Mammary epithelial cell (primary cell): ENCODE measurements at regions of chr1 and their contacts with region 1.

Region 1: DNA sequence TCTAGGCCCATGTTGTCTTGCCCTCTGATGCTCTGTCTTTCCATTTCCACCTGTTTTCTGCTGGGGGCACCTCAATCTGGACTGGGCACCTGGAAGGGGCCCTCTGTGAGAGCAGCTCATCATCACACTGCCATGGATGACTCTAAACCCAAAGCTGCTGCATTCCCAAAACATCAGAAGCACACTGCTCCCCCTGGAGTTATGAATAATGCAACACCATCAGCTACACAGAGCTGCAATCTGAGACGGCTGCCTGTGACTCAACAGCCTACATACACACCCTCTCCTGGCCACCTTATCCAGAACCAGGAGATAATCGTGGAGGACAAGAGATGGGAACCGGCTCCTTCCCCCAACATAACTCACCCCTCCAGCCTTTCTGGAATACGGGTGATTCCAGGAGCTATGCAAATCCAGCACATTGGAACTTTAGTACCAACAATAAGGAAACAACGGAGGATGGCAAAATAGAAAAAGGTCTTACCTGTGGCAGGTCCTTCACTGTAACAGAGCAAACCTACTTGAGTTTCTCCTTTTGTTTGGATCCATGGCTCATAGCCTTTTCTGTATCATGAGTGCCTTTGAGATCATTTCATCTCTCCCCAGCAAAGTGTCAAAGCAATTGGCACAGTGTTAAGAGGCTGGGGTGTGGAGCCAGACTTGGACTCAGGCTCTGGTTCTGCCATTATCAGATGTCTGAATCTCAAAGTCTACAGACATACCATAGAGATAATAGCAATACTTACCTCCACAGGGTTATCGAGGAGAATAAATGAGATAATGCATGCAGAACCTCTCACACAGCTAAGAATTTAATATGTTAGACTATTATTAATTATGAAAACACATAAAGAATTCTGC is 29.3 kb downstream of the AK2 start:
- DNase-seq: peak; percentile 93
- H3K4me3 ChIP-seq: no peak overlapping the region
- H3K27ac ChIP-seq: peak overlapping the region; percentile 51
- H3K4me1 ChIP-seq: peaks cover 55% of the 10 kb centered on the region
- H3K27me3 ChIP-seq: no peaks in the 10 kb centered on the region
- CTCF ChIP-seq: peak; percentile 74 to 76

Region 2: DNA sequence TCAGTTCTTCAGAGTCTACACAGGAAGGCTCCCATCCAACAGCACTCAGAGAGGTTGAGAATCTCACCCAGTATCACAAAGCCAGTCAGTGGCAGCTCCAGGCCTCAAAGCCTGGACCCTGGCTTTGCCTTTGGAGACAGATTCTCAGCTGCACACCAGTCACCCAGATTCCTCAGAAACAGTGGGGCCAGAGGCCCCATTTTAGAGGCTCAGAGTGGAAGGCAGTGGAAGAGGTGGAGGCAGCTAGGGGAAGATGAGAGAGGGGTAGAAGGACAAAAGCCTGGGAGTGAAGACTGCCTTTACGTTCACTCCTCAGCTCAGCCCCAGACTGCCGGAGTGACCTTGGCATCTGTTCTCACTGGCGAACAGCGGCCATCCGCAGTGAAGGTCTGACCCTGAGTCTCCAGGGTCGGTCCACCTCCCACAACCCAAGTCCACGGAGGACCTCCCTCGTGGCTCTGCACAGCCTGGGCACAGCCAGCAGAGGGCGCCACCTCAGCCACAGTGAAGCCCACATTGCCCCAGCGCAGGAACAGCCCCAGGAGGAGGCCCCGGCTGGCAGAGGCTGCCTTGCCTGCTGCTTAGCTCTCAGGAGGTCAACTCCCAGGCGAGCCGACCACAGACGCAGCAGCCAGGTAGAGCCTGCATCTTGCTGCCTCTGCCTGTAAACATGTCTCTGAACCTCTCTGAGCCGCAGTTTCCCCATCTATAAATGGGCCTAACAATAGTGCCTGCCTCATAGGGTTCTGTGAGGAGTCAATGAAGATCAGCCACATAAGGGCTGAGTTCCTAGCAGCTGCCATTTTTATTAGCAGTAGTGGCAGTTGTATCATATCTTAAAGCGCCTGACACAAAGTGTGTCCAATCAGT is 130.8 kb before region 1 on chr1:
- CTCF ChIA-PET with region 1: interaction called, 3 read pairs
- dilution Hi-C with region 1: no loop called
- in situ Hi-C with region 1: no loop called
- intact Hi-C with region 1: loop called (anchors 2 kb)
- DNase-seq: no peak
- H3K4me3 ChIP-seq: no peak overlapping the region
- H3K27ac ChIP-seq: no peak overlapping the region
- H3K4me1 ChIP-seq: peaks cover 3% of the 10 kb centered on the region
- H3K27me3 ChIP-seq: peaks cover 1% of the 10 kb centered on the region
- CTCF ChIP-seq: peak; percentile 87 to 92

Region 3: DNA sequence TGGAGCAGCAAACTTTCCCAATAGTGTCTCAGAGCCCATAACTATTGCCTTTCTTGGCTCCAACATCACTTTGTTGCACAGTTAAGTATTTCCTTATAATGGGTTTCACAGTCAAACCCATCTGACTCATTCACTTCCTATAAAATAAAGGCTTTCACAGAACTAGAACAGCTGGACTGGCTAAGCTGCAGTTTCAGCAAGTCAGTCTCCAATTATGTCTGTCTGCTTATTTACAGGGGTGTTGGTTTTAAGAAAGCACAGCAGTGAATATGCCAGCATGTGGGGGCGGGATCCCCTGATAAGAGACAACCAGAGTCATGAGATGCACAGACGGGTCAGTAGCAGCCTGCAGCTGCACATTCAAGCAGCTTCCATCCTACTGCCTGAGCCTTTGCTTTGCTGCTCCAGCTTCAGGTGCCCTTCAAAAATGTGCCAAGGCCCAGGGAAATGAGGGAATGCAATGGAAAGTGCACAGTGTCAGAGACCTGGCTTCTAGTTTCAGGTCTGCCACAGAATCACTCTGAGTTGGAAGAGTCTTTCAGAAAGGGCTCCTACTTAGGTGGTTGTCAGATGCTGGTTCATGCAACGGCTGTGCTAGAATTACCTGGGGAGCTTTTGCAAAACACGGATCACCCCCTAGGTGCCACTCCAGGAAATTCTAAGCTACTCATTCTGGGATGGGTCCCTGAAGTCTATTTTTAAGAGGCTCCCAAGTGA is 67.6 kb before region 1 on chr1:
- CTCF ChIA-PET with region 1: no interaction called
- dilution Hi-C with region 1: loop called (anchors 5 kb)
- in situ Hi-C with region 1: loop called in 1 of 2 experiments (anchors 5 kb)
- intact Hi-C with region 1: no loop called
- DNase-seq: peak; percentile 94
- H3K4me3 ChIP-seq: no peak overlapping the region
- H3K27ac ChIP-seq: peak overlapping the region; percentile 63
- H3K4me1 ChIP-seq: peaks cover 30% of the 10 kb centered on the region
- H3K27me3 ChIP-seq: no peaks in the 10 kb centered on the region
- CTCF ChIP-seq: no peak

Region 4: GRCh38 chr1:32964461-32965250 is 42.8 kb before region 1 on chr1 and contains the start of gene RNF19B:
- CTCF ChIA-PET with region 1: no interaction called
- dilution Hi-C with region 1: no loop called
- in situ Hi-C with region 1: no loop called
- intact Hi-C with region 1: loop called (anchors 1 kb)
- DNase-seq: peak; percentile 97
- H3K4me3 ChIP-seq: peak within 1 kb of the TSS; percentile 85 to 99 (median 96)
- H3K27ac ChIP-seq: peak within 1 kb of the TSS; percentile 87
- H3K4me1 ChIP-seq: peaks cover 43% of the 10 kb centered on the region
- H3K27me3 ChIP-seq: no peaks in the 10 kb centered on the region
- CTCF ChIP-seq: no peak
- total RNA-seq, gene RNF19B: 30.5 to 62.4 TPM

Region 5: GRCh38 chr1:32992489-32993323 is 14.7 kb before region 1 on chr1:
- CTCF ChIA-PET with region 1: interaction called, 3 read pairs
- dilution Hi-C with region 1: no loop called
- in situ Hi-C with region 1: no loop called
- intact Hi-C with region 1: loop called (anchors 1 kb)
- DNase-seq: peak; percentile 100
- H3K4me3 ChIP-seq: no peak overlapping the region
- H3K27ac ChIP-seq: peak overlapping the region; percentile 95
- H3K4me1 ChIP-seq: peaks cover 60% of the 10 kb centered on the region
- H3K27me3 ChIP-seq: no peaks in the 10 kb centered on the region
- CTCF ChIP-seq: no peak

Region 6: GRCh38 chr1:33086384-33086850 is 79.0 kb after region 1 on chr1:
- CTCF ChIA-PET with region 1: no interaction called
- dilution Hi-C with region 1: no loop called
- in situ Hi-C with region 1: no loop called
- intact Hi-C with region 1: loop called (anchors 1 kb)
- DNase-seq: peak; percentile 51
- H3K4me3 ChIP-seq: no peak overlapping the region
- H3K27ac ChIP-seq: no peak overlapping the region
- H3K4me1 ChIP-seq: peaks cover 7% of the 10 kb centered on the region
- H3K27me3 ChIP-seq: no peaks in the 10 kb centered on the region
- CTCF ChIP-seq: peak; percentile 75 to 89

Region 7: GRCh38 chr1:33295450-33296081 is 288.1 kb after region 1 on chr1:
- CTCF ChIA-PET with region 1: no interaction called
- dilution Hi-C with region 1: no loop called
- in situ Hi-C with region 1: no loop called
- intact Hi-C with region 1: no loop called
- DNase-seq: peak; percentile 76
- H3K4me3 ChIP-seq: no peak overlapping the region
- H3K27ac ChIP-seq: no peak overlapping the region
- H3K4me1 ChIP-seq: no peaks in the 10 kb centered on the region
- H3K27me3 ChIP-seq: no peaks in the 10 kb centered on the region
- CTCF ChIP-seq: peak; percentile 94 to 97